GM12878 (cell line): ENCODE measurements at regions of chr19 and their contacts with region 1.

Region 1: GRCh38 chr19:44752816-44753618 is 4.5 kb downstream of the BCL3 start:
- DNase-seq: peak; percentile 94
- ATAC-seq: peak; percentile 81
- H3K4me3 ChIP-seq: peak overlapping the region; percentile 98
- H3K27ac ChIP-seq: peak overlapping the region; percentile 95
- H3K4me1 ChIP-seq: peaks cover 34% of the 10 kb centered on the region
- H3K27me3 ChIP-seq: no peaks in the 10 kb centered on the region
- CTCF ChIP-seq: peak in 1 of 3 experiments; percentile 11; a peak in 1 of 6 replicates
- EP300 ChIP-seq: peak; percentile 98 to 99
- POLR2A ChIP-seq: peak; percentile 81
- RAD21 ChIP-seq: no peak

Region 2: GRCh38 chr19:44689056-44689895 is 63.7 kb before region 1 on chr19:
- CTCF ChIA-PET with region 1: interaction called, 3 read pairs
- POLR2A ChIA-PET with region 1: interaction called, 10 read pairs
- RAD21 ChIA-PET with region 1: interaction called, 7 read pairs
- SMC1A ChIA-PET with region 1: interaction called, 7 read pairs
- in situ Hi-C with region 1: no loop called
- intact Hi-C with region 1: loop called (anchors 1 kb)
- DNase-seq: no peak
- ATAC-seq: peak; percentile 54
- H3K4me3 ChIP-seq: no peak overlapping the region
- H3K27ac ChIP-seq: no peak overlapping the region
- H3K4me1 ChIP-seq: peaks cover 44% of the 10 kb centered on the region
- H3K27me3 ChIP-seq: no peaks in the 10 kb centered on the region
- CTCF ChIP-seq: peak; percentile 89 to 98 (median 92)
- EP300 ChIP-seq: no peak
- POLR2A ChIP-seq: no peak
- RAD21 ChIP-seq: peak; percentile 82

Region 3: DNA sequence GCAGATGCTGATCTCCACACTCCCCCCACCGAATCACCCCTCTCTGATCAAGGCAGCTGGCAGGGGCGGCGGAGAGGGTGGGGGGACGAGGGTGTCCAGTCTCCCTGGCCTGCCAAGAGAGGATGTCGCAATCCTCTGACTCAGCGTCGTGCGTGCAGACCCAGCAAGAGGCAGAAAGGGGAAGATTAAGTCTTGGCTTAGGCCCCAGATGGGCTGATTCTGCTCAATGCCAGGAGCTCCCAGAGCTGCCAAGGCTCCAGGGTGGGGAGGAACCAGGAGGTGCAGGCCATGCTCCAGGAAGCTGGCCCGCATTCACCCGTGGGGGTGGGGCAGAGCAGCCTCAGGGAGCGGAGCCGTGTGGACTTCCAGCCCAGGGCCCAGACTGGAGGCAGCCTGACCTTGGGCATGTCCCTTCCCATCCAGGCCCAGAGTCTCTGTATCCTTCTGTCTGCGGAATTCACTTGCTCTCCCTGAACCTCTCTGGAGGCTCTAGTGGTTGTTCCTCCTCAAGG is 11.1 kb before region 1 on chr19:
- CTCF ChIA-PET with region 1: interaction called, 22 read pairs
- POLR2A ChIA-PET with region 1: interaction called, 20 read pairs
- RAD21 ChIA-PET with region 1: interaction called, 21 read pairs
- SMC1A ChIA-PET with region 1: interaction called, 9 read pairs
- in situ Hi-C with region 1: no loop called
- intact Hi-C with region 1: loop called (anchors 1 kb)
- DNase-seq: no peak
- ATAC-seq: no peak
- H3K4me3 ChIP-seq: no peak overlapping the region
- H3K27ac ChIP-seq: no peak overlapping the region
- H3K4me1 ChIP-seq: peaks cover 33% of the 10 kb centered on the region
- H3K27me3 ChIP-seq: no peaks in the 10 kb centered on the region
- CTCF ChIP-seq: no peak
- EP300 ChIP-seq: no peak
- POLR2A ChIP-seq: no peak
- RAD21 ChIP-seq: no peak

Region 4: DNA sequence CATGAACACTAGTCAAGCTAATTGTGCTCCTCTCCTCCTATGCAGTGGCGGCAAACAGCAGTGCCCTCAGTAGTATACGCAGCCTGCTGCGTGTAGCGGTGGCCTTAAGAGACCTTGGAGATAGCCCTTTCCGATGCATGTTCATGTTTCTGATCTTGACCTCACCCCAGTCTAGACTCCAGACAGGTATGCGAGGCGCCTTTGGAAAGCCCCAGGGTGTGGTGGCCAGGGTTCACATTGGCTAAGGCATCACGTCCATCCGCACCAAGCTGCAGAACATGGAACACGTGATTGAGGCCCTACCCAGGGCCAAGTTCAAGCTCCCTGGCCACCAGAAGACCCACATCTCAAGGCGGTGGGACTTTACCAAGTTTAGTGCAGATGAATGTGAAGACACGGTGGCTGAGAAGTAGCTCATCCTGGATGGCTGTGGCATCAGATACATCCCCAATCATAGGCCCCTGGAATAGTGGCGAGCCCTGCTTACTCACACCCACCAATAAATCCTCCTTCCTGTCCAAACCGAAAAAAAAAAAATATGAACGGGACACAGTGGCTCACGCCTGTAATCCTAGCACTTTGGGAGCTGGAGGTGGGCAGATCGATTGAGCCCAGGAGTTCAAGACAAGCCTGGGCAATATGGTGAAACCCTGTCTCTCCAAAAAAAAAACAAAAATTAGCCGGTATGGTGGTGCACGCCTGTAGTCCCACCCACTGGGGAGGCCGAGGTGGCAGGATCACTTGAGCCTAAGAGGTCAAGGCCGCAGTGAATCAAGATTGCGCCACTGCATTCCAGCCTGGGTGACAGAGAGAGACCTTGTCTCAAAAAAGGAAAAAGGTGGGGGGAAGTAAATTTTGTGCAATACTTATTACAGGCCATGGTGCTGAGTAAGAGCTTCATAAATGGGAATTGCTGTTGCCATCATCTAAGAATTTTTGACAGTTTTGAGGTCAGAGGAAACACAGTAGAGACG is 12.2 kb after region 1 on chr19:
- CTCF ChIA-PET with region 1: interaction called, 11 read pairs
- POLR2A ChIA-PET with region 1: interaction called, 16 read pairs
- RAD21 ChIA-PET with region 1: interaction called, 36 read pairs
- SMC1A ChIA-PET with region 1: interaction called, 31 read pairs
- in situ Hi-C with region 1: no loop called
- intact Hi-C with region 1: loop called (anchors 1 kb)
- DNase-seq: no peak
- ATAC-seq: no peak
- H3K4me3 ChIP-seq: no peak overlapping the region
- H3K27ac ChIP-seq: no peak overlapping the region
- H3K4me1 ChIP-seq: peaks cover 20% of the 10 kb centered on the region
- H3K27me3 ChIP-seq: no peaks in the 10 kb centered on the region
- CTCF ChIP-seq: no peak
- EP300 ChIP-seq: no peak
- POLR2A ChIP-seq: no peak
- RAD21 ChIP-seq: no peak